CD4-positive, alpha-beta memory T cell (primary cell): ENCODE measurements at regions of chr16 and their contacts with region 1.

Region 1: DNA sequence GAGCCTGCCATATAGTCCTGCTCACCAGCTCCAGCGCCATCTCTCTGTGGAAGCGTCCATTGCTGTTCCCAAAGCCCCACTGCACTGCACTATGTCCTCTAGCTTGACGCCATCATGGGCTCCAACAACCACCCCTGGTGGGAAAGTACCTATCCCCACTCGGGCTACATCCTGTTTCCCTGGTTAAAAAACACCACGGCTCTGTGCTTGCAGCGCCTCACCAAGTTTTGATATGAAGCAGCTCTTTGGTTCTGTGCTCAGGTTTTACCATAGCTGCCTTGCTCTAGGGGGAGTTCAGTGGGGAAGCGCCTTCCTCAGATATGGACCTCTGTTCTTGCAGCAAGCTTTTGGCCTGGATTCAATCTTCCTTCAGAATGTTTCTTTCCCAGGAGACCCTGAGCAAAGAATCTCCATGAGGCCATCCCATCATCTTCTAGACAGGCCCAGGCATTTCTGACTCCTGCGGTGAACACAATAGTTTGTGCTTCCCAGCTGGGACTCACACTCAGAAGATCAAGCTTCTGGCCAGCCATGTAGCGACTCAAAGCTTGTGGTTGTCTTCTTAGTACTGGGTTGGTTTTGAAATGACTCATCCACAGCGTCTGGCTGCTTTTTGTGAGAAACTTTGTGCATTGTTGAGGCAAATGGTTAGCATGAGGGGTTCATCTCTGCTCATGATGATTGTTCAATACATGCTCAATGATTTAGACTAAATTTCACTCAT is 39.5 kb downstream of the DYNLRB2 start:
- DNase-seq: peak; percentile 55 to 81 (median 64)
- H3K4me3 ChIP-seq: peak overlapping the region in 1 of 2 donors; percentile 22
- H3K4me3 Mint-ChIP-seq: peak overlapping the region; percentile 39 to 84 (median 64)
- H3K27ac ChIP-seq: peak overlapping the region; percentile 7
- H3K27ac Mint-ChIP-seq: peak overlapping the region; percentile 86 to 96 (median 92)
- H3K4me1 ChIP-seq: peaks cover 46% of the 10 kb centered on the region
- H3K4me1 Mint-ChIP-seq: peaks cover 26 to 56% (median 38%) of the 10 kb centered on the region in 4 donors
- H3K27me3 ChIP-seq: no peaks in the 10 kb centered on the region
- H3K27me3 Mint-ChIP-seq: no peaks in the 10 kb centered on the region

Region 2: DNA sequence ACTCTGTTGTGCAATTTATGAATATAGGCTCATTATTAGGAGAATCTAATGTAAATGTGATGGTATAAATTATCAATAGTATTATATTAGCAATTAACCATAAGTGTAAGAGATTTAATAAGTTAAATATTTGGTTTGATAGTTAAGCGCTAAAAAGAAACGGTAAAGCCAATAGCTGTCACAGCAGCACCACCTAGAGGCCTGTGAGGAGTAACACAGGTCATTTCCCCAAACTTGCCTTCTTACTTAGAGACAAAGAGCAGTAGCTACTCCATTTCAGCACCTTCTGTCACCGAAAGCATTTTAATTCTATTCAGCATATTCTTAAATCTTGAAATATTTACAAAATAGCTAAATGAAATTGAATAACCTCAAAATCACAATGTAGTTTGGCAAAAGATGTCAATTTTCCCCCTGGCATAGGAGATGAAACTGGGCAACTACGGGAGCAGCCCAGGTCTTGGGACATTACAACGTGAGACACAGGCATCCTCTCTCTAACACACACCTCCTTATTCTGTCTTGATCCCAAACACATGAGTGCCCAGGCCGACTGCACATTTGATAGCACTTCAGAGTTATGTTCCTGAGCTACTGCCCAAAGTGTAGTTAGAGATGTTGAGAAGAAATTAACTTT is 53.7 kb before region 1 on chr16:
- CTCF ChIA-PET with region 1: interaction called, 11 read pairs
- POLR2A ChIA-PET with region 1: interaction called, 7 read pairs
- intact Hi-C with region 1: loop called (anchors 2 kb)
- DNase-seq: peak; percentile 53 to 66 (median 62)
- H3K4me3 ChIP-seq: no peak overlapping the region
- H3K4me3 Mint-ChIP-seq: no peak overlapping the region
- H3K27ac ChIP-seq: no peak overlapping the region
- H3K27ac Mint-ChIP-seq: peak overlapping the region in 1 of 7 donors; percentile 18
- H3K4me1 ChIP-seq: peaks cover 6% of the 10 kb centered on the region
- H3K4me1 Mint-ChIP-seq: peaks cover 0 to 4% (median 2%) of the 10 kb centered on the region in 4 donors
- H3K27me3 ChIP-seq: no peaks in the 10 kb centered on the region
- H3K27me3 Mint-ChIP-seq: no peaks in the 10 kb centered on the region

Region 3: DNA sequence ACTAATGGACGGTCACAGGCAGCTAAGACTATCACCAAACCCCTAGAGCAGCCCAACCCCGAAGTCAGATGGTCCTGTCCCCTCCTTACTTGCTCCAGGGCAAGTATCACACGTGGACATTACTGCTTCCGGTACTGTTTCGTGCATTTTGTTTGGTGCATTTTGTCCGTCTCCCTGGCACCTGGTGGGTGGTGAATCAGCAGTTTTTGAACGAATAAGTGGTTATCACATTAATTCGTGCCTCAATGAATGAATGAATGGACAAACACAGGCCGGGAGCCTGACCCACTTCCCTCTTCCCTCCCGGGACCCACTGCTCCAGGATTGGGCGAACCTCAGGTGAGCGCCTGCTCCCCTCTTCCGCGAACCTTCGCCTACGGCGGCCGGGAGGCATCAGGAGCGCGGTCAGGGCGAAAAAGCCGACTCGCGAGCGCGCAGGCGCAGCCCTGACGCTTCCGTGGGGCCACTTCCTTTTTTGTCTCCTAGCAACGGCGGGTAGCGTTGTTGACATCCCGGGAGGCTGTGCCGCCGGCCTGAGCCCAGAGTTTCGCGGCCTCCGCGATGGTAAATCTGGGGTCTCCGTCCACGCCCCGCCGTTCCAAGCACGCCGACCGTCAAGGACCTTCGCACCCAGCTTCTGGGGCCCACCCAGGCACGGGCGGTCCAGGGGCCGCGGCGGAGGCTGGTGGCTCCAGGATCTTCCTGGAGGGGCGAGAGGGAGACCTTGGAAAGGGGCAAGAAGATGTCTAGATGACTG is 39.6 kb before region 1 on chr16 and contains the start of gene DYNLRB2:
- CTCF ChIA-PET with region 1: interaction called, 9 read pairs
- POLR2A ChIA-PET with region 1: interaction called, 8 read pairs
- intact Hi-C with region 1: loop called (anchors 1 kb)
- DNase-seq: peak; percentile 89 to 96 (median 95)
- H3K4me3 ChIP-seq: peak within 1 kb of the TSS; percentile 57 to 97
- H3K4me3 Mint-ChIP-seq: peak within 1 kb of the TSS; percentile 91 to 98 (median 96)
- H3K27ac ChIP-seq: peak within 1 kb of the TSS; percentile 67
- H3K27ac Mint-ChIP-seq: peak within 1 kb of the TSS; percentile 95 to 99 (median 98)
- H3K4me1 ChIP-seq: peaks cover 12% of the 10 kb centered on the region
- H3K4me1 Mint-ChIP-seq: peaks cover 8 to 21% (median 14%) of the 10 kb centered on the region in 4 donors
- H3K27me3 ChIP-seq: no peaks in the 10 kb centered on the region
- H3K27me3 Mint-ChIP-seq: peaks cover 1 to 7% of the 10 kb centered on the region in 2 donors
- total RNA-seq, gene DYNLRB2: 0.78 TPM in 1 of 2 experiments, not detected in the other

Region 4: GRCh38 chr16:80564394-80564793 is 15.9 kb before region 1 on chr16:
- CTCF ChIA-PET with region 1: interaction called, 10 read pairs
- POLR2A ChIA-PET with region 1: interaction called, 12 read pairs
- intact Hi-C with region 1: no loop called
- DNase-seq: peak in 1 of 5 donors; percentile 10
- H3K4me3 ChIP-seq: peak overlapping the region in 1 of 2 donors; percentile 22
- H3K4me3 Mint-ChIP-seq: peak overlapping the region in 7 of 8 donors; percentile 26 to 62 (median 41)
- H3K27ac ChIP-seq: no peak overlapping the region
- H3K27ac Mint-ChIP-seq: peak overlapping the region; percentile 13 to 88 (median 65)
- H3K4me1 ChIP-seq: peaks cover 21% of the 10 kb centered on the region
- H3K4me1 Mint-ChIP-seq: peaks cover 12 to 23% (median 22%) of the 10 kb centered on the region in 4 donors
- H3K27me3 ChIP-seq: no peaks in the 10 kb centered on the region
- H3K27me3 Mint-ChIP-seq: peaks cover 0 to 2% of the 10 kb centered on the region in 2 donors

Region 5: DNA sequence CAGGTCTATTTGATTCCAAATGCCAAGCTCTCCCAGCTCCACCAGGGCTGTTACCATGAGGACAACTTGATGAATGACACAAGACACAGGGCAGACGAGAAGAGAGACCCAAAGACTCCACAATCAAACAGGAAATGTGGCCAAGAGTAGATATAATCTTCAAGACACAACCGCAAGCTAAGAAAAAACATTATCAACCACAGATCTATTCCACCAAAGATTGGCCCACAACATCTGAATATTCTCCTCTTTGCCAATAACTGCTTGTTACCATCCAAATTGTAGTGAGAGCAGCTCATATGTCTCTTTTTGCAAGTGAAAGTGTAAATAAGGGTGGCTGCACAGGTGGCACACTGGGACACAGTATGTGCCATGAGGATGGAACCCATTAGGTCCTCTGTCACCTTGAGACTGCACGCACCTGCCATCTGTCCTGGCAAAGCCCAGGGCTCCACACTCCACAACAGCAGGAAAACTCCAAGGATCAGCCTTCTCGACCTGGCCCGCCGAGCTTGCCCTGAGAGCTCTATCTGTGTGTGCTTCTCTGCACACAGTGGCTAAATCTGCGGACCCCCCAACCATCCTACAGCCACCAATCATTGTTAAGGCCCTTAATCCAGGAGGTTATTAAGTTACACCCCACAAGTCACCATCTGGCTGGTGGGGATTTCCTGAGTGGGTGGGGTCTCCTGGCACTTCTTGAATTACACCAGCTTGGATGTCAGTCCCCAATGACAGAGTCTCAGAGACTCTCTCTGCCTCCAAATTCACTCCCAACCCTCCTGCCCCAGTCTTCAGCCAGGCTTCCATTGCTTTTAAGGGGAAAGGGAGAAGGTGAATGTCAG is 11.0 kb after region 1 on chr16:
- CTCF ChIA-PET with region 1: interaction called, 4 read pairs
- POLR2A ChIA-PET with region 1: interaction called, 37 read pairs
- intact Hi-C with region 1: loop called (anchors 1 kb)
- DNase-seq: peak; percentile 66 to 82 (median 78)
- H3K4me3 ChIP-seq: peak overlapping the region in 1 of 2 donors; percentile 7
- H3K4me3 Mint-ChIP-seq: peak overlapping the region; percentile 3 to 82 (median 54)
- H3K27ac ChIP-seq: no peak overlapping the region
- H3K27ac Mint-ChIP-seq: peak overlapping the region in 6 of 7 donors; percentile 3 to 74 (median 66)
- H3K4me1 ChIP-seq: peaks cover 22% of the 10 kb centered on the region
- H3K4me1 Mint-ChIP-seq: peaks cover 20 to 37% (median 28%) of the 10 kb centered on the region in 4 donors
- H3K27me3 ChIP-seq: no peaks in the 10 kb centered on the region
- H3K27me3 Mint-ChIP-seq: peaks cover 9 to 17% of the 10 kb centered on the region in 2 donors

Region 6: GRCh38 chr16:80605826-80606766 is 25.8 kb after region 1 on chr16:
- CTCF ChIA-PET with region 1: no interaction called
- POLR2A ChIA-PET with region 1: no interaction called
- intact Hi-C with region 1: no loop called
- DNase-seq: no peak
- H3K4me3 ChIP-seq: no peak overlapping the region
- H3K4me3 Mint-ChIP-seq: peak overlapping the region in 4 of 8 donors; percentile 27 to 51 (median 42)
- H3K27ac ChIP-seq: no peak overlapping the region
- H3K27ac Mint-ChIP-seq: peak overlapping the region in 3 of 7 donors; percentile 5 to 61 (median 52)
- H3K4me1 ChIP-seq: peaks cover 12% of the 10 kb centered on the region
- H3K4me1 Mint-ChIP-seq: peaks cover 8 to 12% (median 12%) of the 10 kb centered on the region in 4 donors
- H3K27me3 ChIP-seq: no peaks in the 10 kb centered on the region
- H3K27me3 Mint-ChIP-seq: no peaks in the 10 kb centered on the region

Region 7: GRCh38 chr16:80656711-80657150 is 76.5 kb after region 1 on chr16:
- CTCF ChIA-PET with region 1: interaction called, 3 read pairs
- POLR2A ChIA-PET with region 1: interaction called, 6 read pairs
- intact Hi-C with region 1: loop called (anchors 5 kb)
- DNase-seq: peak; percentile 46 to 62 (median 51)
- H3K4me3 ChIP-seq: peak overlapping the region; percentile 33 to 72
- H3K4me3 Mint-ChIP-seq: peak overlapping the region; percentile 82 to 97 (median 90)
- H3K27ac ChIP-seq: peak overlapping the region; percentile 52
- H3K27ac Mint-ChIP-seq: peak overlapping the region; percentile 69 to 97 (median 92)
- H3K4me1 ChIP-seq: peaks cover 20% of the 10 kb centered on the region
- H3K4me1 Mint-ChIP-seq: peaks cover 19 to 33% (median 26%) of the 10 kb centered on the region in 4 donors
- H3K27me3 ChIP-seq: no peaks in the 10 kb centered on the region
- H3K27me3 Mint-ChIP-seq: no peaks in the 10 kb centered on the region

Region 8: DNA sequence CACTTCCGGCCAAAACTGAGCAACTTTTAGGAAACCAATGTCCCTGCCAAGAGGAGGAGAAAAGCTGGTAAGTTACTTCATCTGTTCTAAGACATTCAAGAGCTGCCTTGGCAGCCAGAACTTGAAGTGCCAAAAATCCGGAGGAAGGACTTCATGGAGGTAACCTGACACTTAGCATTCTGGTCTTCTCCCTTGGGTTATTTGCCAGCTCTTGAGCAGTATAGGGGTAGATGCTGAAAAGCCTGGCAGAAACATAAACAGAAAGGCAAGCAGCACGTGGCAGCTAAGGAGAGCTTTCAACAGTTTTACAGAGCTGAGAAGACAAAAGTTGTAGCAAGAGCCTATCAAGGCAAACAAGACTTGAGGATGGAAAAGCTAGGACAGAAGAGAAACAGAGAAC is 170.9 kb after region 1 on chr16:
- CTCF ChIA-PET with region 1: interaction called, 3 read pairs
- POLR2A ChIA-PET with region 1: no interaction called
- intact Hi-C with region 1: loop called (anchors 10 kb)
- DNase-seq: no peak
- H3K4me3 ChIP-seq: no peak overlapping the region
- H3K4me3 Mint-ChIP-seq: no peak overlapping the region
- H3K27ac ChIP-seq: no peak overlapping the region
- H3K27ac Mint-ChIP-seq: peak overlapping the region in 2 of 7 donors; percentile 5 to 68
- H3K4me1 ChIP-seq: peaks cover 7% of the 10 kb centered on the region
- H3K4me1 Mint-ChIP-seq: peaks cover 11 to 41% (median 23%) of the 10 kb centered on the region in 4 donors
- H3K27me3 ChIP-seq: no peaks in the 10 kb centered on the region
- H3K27me3 Mint-ChIP-seq: no peaks in the 10 kb centered on the region